ENCODE measurements at regions of chr10 and their contacts with region 1.

Region 1: DNA sequence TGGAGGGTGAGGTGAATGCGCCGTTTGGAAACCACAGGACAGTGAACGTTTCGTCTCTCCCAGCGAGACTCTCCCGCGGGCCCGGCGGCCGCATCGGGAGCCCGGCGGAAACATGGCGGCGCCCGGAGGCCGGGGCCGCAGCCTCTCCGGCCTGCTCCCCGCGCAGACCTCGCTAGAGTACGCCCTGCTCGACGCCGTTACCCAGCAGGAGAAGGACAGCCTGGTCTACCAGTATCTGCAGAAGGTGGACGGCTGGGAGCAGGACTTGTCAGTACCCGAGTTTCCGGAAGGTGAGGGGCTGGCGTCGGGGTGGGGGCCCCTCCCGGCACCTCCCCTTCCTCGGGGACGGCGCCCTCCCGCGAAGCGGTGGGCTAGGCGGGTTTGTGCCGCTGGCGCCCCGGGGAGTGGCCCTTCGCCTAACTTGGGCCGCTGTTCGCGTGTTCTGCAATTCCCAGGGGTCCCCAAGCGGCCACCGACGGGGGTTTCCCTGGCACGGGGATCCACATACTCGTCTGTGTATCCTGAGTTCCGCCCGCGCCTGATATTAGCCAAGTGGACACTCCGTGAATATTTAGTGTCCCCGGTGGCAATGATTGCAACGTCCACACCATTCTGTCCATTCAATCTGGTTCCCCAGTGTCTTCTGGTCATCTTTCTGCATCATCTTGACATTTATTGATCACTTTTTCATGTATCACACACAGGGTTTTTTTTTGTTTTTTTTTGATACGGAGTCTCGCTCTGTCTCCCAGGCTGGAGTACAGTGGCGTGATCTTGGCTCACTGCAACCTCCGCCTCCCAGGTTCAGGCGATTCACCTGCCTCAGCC is 514 bp downstream of the NHLRC2 start:
- DNase-seq: peak; percentile 23
- ATAC-seq: peak; percentile 88
- H3K4me3 ChIP-seq: peak overlapping the region; percentile 92 to 98 (median 92)
- H3K27ac ChIP-seq: peak overlapping the region; percentile 94
- H3K4me1 ChIP-seq: peaks cover 39% of the 10 kb centered on the region
- H3K27me3 ChIP-seq: no peaks in the 10 kb centered on the region; a peak in 1 of 5 replicates
- CTCF ChIP-seq: peak; percentile 33; the same call in 1 of the 2 replicates
- EP300 ChIP-seq: no peak
- POLR2A ChIP-seq: peak; percentile 54 to 74; a peak in 3 of 4 replicates
- RAD21 ChIP-seq: no peak

Region 2: DNA sequence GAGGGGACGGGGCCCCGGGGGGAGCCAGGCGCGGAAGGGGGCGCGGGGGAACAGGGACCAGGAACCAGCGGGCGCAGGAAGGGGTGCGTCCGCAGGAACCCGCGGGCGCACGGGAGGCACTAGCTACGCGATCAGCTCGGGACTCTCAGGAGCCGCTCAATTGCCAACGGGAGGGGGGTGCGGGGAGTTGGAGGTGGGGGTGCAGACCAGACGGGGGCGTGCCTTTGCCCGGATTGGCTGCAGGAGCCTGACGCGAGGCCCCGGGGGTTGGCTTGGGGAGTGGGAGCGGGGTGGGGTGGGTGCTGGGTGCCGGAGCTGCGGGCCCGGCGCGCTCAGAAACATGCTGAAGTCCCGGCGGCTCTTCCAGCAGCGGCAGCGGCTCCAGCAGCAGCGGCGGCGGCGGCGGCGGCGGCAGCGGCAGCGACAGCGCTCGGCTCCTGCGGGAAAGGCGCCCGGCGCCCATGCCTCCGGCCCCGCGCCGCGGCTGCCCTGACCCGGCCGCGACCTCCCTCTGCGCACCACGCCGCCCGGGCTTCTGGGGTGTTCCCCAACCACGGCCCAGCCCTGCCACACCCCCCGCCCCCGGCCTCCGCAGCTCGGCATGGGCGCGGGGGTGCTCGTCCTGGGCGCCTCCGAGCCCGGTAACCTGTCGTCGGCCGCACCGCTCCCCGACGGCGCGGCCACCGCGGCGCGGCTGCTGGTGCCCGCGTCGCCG is 188.7 kb after region 1 on chr10 and contains the start of gene ADRB1:
- CTCF ChIA-PET with region 1: no interaction called
- POLR2A ChIA-PET with region 1: no interaction called
- in situ Hi-C with region 1: no loop called
- intact Hi-C with region 1: loop called (anchors 2 kb)
- DNase-seq: peak; percentile 28
- ATAC-seq: peak; percentile 89
- H3K4me3 ChIP-seq: peak within 1 kb of the TSS; percentile 34 to 55 (median 49); a peak in 4 of 6 replicates
- H3K27ac ChIP-seq: no peak within 1 kb of the TSS
- H3K4me1 ChIP-seq: 0 out of 2 replicates have a peak, but pooled peaks cover 4% of the 10 kb centered on the region
- H3K27me3 ChIP-seq: peaks cover 7 to 39% of the 10 kb centered on the region in 2 experiments; a peak in 3 of 5 replicates
- CTCF ChIP-seq: no peak
- EP300 ChIP-seq: no peak
- POLR2A ChIP-seq: no peak
- RAD21 ChIP-seq: no peak
- total RNA-seq, gene ADRB1: 0.07 TPM in 1 of 2 replicates, not detected in the other

Region 3: DNA sequence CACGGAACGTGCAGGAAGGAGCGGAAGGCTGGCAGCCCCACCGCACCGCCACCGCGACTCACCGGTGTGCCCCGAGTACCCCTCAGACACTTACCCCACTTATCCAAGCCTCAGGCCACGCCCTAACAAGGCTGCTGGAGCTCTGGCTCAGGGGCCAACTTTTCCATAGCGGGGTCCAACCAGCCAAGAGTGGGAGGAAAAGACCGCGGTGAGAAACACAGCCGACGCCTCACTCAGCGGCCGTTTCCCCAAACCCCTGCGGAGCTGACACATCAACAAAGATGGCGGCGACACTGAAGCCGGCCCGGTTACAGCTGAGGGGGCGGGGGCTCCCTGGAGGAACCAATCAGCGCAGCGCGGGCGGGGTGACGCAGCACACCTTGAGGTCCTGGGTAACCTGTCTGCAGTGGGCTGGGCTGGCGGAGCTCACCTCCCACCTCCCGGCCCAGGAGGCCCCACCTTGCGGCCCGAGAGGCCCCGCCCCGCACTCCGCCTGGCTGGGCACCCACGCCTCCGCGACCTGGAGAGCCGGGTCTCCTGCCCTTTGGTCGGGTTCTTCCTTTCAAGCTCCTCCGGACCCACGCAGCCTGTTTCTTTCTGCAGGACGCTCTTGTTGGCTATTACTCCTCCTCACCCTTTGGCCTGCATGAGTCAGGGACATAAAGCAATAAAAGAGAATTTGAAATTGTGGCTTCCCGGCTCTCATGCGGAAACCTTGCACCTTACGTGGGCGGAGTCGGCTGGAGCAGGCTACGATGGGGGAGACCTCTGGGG is 319.1 kb after region 1 on chr10 and contains the start of gene CCDC186:
- CTCF ChIA-PET with region 1: no interaction called
- POLR2A ChIA-PET with region 1: no interaction called
- in situ Hi-C with region 1: no loop called
- intact Hi-C with region 1: loop called (anchors 5 kb)
- DNase-seq: peak; percentile 92
- ATAC-seq: peak; percentile 100
- H3K4me3 ChIP-seq: peak within 1 kb of the TSS; percentile 80 to 94 (median 90)
- H3K27ac ChIP-seq: peak within 1 kb of the TSS; percentile 71
- H3K4me1 ChIP-seq: peaks cover 27% of the 10 kb centered on the region
- H3K27me3 ChIP-seq: no peaks in the 10 kb centered on the region; a peak in 1 of 5 replicates
- CTCF ChIP-seq: no peak
- EP300 ChIP-seq: no peak
- POLR2A ChIP-seq: peak; percentile 75 to 83
- RAD21 ChIP-seq: no peak
- total RNA-seq, gene CCDC186: 11.8 and 18.0 TPM in 2 replicates